Endothelial cell of umbilical vein (primary cell): ENCODE measurements at regions of chr1 and their contacts with region 1.

Region 1: GRCh38 chr1:52127181-52128180 is 14.4 kb upstream of the ZFYVE9 start:
- DNase-seq: peak; percentile 85
- H3K4me3 ChIP-seq: no peak overlapping the region
- H3K27ac ChIP-seq: no peak overlapping the region
- H3K4me1 ChIP-seq: no peaks in the 10 kb centered on the region
- H3K27me3 ChIP-seq: no peaks in the 10 kb centered on the region
- CTCF ChIP-seq: peak; percentile 62 to 69
- POLR2A ChIP-seq: no peak

Region 2: GRCh38 chr1:52141513-52142219 is 14.2 kb after region 1 on chr1 and contains the start of gene ZFYVE9:
- CTCF ChIA-PET with region 1: interaction called, 18 read pairs
- POLR2A ChIA-PET with region 1: no interaction called
- dilution Hi-C with region 1: no loop called
- intact Hi-C with region 1: no loop called
- DNase-seq: peak; percentile 79
- H3K4me3 ChIP-seq: peak within 1 kb of the TSS; percentile 29 to 83 (median 48)
- H3K27ac ChIP-seq: peak within 1 kb of the TSS; percentile 79
- H3K4me1 ChIP-seq: peaks cover 33% of the 10 kb centered on the region
- H3K27me3 ChIP-seq: no peaks in the 10 kb centered on the region
- CTCF ChIP-seq: peak; percentile 65 to 71
- POLR2A ChIP-seq: peak; percentile 45
- total RNA-seq, gene ZFYVE9: 14.8 and 16.8 TPM in 2 replicates

Region 3: DNA sequence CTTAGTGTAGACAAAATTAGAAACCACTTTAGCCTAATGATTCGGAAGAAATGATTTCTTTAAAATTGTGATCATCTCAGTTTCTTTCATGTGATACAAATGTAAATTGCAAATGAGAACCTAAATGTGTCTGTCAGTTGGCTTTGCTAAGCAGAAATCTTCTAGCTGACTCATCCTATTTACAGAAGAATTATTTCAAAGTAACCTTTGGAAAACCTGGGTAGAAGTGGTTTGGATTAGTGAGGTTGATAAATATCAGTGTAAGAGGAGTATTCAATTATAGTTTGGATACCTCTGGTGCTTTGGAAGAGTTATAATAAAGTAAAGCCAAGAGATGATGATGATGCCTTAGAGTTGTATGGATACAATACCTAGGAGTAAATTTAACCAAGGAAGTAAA is 201.1 kb after region 1 on chr1:
- CTCF ChIA-PET with region 1: interaction called, 19 read pairs
- POLR2A ChIA-PET with region 1: interaction called, 7 read pairs
- dilution Hi-C with region 1: no loop called
- intact Hi-C with region 1: loop called (anchors 1 kb)
- DNase-seq: no peak
- H3K4me3 ChIP-seq: no peak overlapping the region
- H3K27ac ChIP-seq: no peak overlapping the region
- H3K4me1 ChIP-seq: no peaks in the 10 kb centered on the region
- H3K27me3 ChIP-seq: no peaks in the 10 kb centered on the region
- CTCF ChIP-seq: no peak
- POLR2A ChIP-seq: no peak

Region 4: DNA sequence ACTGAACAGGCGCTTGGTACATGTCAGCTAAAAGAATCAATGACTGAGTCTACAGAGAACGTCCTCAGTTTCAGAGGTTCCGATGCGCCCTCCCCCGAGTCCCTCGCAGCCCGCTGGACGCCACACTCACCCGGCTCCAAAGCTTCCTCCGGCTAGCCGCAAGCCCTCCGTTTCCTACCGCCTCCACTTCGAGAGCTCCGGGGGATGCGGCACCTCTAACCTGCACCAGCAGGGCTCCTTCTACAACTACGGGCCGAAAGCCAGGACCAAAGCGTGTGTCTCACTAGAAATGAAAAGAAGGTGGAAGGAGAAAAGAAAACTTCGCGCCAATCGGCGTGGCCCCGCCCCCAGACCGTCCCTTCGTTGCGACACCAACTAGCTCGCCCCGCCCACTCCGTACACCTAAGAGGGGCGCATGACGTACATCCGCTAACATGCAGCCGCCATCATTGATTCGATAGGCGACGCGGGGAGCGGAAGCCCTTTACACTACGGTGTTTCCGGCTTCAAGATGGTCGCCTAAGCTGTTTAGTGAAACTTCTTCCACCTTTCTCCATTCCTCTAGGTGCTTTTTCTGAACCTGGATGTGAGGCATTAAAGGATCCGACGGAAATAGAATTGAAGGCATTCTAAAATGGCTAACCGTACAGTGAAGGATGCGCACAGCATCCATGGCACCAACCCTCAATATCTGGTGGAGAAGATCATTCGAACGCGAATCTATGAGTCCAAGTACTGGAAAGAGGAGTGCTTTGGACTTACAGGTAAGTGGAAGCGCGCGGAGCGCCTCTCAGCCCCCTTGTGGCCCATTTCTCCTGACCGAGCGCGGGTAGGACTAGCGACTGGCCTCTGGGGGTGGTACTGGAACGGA is 276.9 kb after region 1 on chr1 and contains the starts of genes ORC1 and PRPF38A:
- CTCF ChIA-PET with region 1: interaction called, 5 read pairs
- POLR2A ChIA-PET with region 1: no interaction called
- dilution Hi-C with region 1: no loop called
- intact Hi-C with region 1: loop called (anchors 1 kb)
- DNase-seq: peak; percentile 97
- H3K4me3 ChIP-seq: peak within 1 kb of the TSS; percentile 57 to 98 (median 83)
- H3K27ac ChIP-seq: peak within 1 kb of the TSS; percentile 98
- H3K4me1 ChIP-seq: peaks cover 14% of the 10 kb centered on the region
- H3K27me3 ChIP-seq: no peaks in the 10 kb centered on the region
- CTCF ChIP-seq: peak; percentile 60 to 75
- POLR2A ChIP-seq: peak; percentile 82
- total RNA-seq, gene ORC1: 11.0 and 12.0 TPM in 2 replicates
- total RNA-seq, gene PRPF38A: 38.4 and 42.0 TPM in 2 replicates

Region 5: DNA sequence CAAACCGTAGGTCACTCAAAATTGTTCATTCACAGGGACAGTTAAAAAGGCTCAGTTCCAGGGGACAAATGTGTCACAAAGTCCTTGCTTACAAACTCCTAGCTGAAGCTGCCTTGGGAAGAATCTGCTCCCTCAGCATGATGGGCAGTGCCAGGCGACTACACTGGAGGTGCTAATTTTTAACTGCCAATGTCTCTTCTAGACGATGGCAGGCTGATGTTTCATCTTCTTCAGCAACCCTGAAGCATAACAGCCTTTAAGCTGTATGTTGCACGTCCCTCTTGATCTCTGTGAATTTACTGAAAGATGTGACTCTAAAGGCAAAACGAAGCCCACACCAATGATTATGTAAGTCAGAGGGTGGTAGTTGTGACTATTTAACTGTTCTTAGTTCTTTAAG is 559.3 kb after region 1 on chr1:
- CTCF ChIA-PET with region 1: interaction called, 7 read pairs
- POLR2A ChIA-PET with region 1: no interaction called
- dilution Hi-C with region 1: no loop called
- intact Hi-C with region 1: loop called (anchors 1 kb)
- DNase-seq: no peak
- H3K4me3 ChIP-seq: no peak overlapping the region
- H3K27ac ChIP-seq: no peak overlapping the region
- H3K4me1 ChIP-seq: no peaks in the 10 kb centered on the region
- H3K27me3 ChIP-seq: no peaks in the 10 kb centered on the region
- CTCF ChIP-seq: no peak
- POLR2A ChIP-seq: no peak